Esophagus muscularis mucosa (tissue), 4 donors: ENCODE measurements at regions of chr18 and their contacts with region 1.

Region 1: DNA sequence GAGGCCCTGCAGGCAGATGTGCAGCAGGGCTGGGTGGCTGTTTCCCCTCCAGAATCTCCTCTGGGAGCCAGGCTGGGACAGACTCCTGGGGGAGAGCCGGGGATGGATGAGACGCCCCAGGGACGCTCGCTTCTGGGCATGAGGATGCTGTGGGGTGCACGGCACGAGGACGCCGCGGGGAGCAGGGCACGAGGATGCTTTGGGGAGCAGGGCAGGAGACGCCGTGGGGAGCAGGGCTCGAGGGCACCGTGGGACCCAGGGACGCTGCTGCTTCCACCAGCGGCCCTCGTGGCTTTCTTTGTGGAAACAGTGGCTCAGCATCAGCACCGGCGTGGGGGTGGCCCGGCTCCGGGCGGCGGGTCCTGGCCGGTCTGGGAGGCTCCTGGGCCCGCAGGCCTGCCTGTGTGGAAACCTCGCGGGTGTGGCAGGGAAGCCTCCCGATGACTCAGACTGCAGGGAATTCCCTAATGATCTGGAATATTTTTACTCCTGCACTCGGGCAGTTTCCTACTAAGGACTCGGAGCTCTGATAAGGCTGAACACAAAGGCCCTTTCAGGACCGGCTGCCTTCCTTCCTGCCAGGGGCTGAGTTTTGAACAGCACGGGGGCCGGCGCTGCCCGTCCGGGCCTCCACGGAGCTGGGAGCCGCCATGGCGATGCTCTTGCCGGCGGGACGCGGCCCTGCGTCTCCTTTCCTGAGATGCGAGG is 62.6 kb downstream of the NFATC1 start:
- DNase-seq: peak; percentile 92
- H3K4me3 ChIP-seq: peak overlapping the region; percentile 27 to 39 (median 34)
- H3K27ac ChIP-seq: peak overlapping the region; percentile 70 to 84 (median 81)
- H3K4me1 ChIP-seq: peaks cover 36 to 57% (median 50%) of the 10 kb centered on the region in 4 donors
- H3K27me3 ChIP-seq: no peaks in the 10 kb centered on the region
- CTCF ChIP-seq: no peak
- EP300 ChIP-seq: no peak
- POLR2A ChIP-seq: no peak

Region 2: DNA sequence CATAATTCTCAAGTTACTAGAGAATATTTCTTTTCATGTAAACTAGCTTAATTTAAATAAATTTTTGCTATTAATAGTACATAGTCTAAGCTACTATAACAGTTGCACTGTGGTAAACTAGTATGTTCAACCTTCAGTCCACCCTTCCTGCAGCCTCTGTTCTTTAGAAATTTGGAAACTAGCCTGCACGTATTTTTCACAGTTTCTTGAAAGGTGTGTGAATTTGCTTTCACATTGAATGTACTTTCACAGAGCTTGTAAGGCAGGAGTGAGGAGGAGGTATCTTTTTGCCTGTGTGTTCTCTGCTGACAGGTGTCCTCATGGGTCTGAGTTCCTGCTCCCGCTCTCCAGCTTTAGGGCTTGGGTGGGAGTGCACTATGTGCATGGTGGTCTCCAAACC is 271.6 kb before region 1 on chr18:
- intact Hi-C with region 1: no loop called
- DNase-seq: no peak
- H3K4me3 ChIP-seq: no peak overlapping the region
- H3K27ac ChIP-seq: no peak overlapping the region
- H3K4me1 ChIP-seq: peaks cover 0 to 6% (median 2%) of the 10 kb centered on the region in 4 donors
- H3K27me3 ChIP-seq: no peaks in the 10 kb centered on the region
- CTCF ChIP-seq: no peak
- EP300 ChIP-seq: no peak
- POLR2A ChIP-seq: no peak

Region 3: DNA sequence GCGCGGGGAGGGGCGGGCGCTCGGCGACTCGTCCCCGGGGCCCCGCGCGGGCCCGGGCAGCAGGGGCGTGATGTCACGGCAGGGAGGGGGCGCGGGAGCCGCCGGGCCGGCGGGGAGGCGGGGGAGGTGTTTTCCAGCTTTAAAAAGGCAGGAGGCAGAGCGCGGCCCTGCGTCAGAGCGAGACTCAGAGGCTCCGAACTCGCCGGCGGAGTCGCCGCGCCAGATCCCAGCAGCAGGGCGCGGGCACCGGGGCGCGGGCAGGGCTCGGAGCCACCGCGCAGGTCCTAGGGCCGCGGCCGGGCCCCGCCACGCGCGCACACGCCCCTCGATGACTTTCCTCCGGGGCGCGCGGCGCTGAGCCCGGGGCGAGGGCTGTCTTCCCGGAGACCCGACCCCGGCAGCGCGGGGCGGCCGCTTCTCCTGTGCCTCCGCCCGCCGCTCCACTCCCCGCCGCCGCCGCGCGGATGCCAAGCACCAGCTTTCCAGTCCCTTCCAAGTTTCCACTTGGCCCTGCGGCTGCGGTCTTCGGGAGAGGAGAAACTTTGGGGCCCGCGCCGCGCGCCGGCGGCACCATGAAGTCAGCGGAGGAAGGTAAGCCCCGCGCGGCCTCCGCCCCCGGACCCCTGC is 62.4 kb before region 1 on chr18 and contains the start of gene NFATC1:
- intact Hi-C with region 1: loop called (anchors 5 kb)
- DNase-seq: no peak
- H3K4me3 ChIP-seq: peak within 1 kb of the TSS; percentile 76 to 91 (median 86)
- H3K27ac ChIP-seq: peak within 1 kb of the TSS; percentile 97 to 99 (median 98)
- H3K4me1 ChIP-seq: peaks cover 38 to 74% (median 63%) of the 10 kb centered on the region in 4 donors
- H3K27me3 ChIP-seq: peaks cover 0 to 5% (median 0%) of the 10 kb centered on the region in 4 donors
- CTCF ChIP-seq: peak in 1 of 3 experiments; percentile 10
- EP300 ChIP-seq: no peak
- POLR2A ChIP-seq: no peak
- total RNA-seq, gene NFATC1: 15.0 to 22.0 (median 17.8) TPM

Region 4: DNA sequence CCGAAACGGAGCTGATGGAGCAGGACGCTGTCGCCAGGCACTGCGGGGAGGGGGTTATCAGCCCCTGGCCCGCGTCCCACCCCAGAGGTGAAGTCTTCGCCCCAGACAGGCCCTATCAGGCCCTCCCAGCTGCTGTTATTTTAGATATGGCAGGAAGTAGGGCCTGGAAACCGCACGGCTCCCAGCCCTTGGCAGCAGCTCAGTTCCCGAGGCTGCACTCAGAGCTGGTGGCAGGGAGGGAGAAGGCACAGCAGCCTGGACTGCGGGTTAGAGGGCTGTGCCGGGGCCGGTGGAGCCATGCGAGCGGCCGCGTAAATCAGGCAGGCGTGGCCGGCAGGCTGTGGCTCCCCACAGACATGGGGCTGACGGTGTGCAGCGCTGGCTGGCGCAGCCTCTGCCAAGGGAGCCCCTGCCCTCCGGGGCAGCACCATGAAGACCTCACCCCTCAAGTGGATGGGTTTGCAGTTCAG is 48.8 kb after region 1 on chr18:
- intact Hi-C with region 1: loop called (anchors 5 kb)
- DNase-seq: no peak
- H3K4me3 ChIP-seq: peak overlapping the region; percentile 44 to 55 (median 50)
- H3K27ac ChIP-seq: peak overlapping the region; percentile 84 to 91 (median 86)
- H3K4me1 ChIP-seq: peaks cover 30 to 39% (median 32%) of the 10 kb centered on the region in 4 donors
- H3K27me3 ChIP-seq: no peaks in the 10 kb centered on the region
- CTCF ChIP-seq: no peak
- EP300 ChIP-seq: no peak
- POLR2A ChIP-seq: peak; percentile 14